GM12878 (cell line): ENCODE measurements at regions of chr20 and their contacts with region 1.

Region 1: DNA sequence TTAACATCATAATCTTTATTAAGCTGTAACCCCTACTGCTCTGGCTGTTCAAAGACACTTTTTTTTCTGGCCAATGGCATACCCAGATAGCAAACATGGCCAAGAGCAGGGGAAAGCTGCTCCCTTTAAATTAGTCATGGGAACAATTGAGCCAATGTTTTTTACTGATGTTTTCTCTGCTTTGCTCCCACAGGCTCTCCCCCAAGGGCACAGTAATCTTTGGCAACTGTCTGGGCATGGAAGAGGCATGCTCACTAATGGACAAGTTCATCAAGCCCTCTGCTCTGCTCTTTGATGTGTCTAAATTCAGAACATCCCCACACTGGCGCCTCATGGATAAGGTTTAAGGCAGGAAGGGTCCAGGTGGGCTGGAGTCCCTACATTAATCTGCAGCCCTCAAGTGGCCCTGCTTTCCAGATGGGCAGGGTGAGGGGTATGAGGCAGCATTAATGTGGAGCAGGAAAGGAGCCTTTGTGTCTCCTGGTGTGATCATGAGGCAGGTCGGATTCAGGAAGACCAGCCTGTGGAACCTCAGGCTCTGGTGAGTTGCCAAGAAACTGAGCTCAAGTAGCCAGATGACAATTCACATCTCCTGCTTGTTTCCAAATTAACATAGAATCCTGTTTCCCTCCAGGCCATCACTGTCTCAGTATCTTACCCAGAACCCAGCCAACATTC is 227.0 kb upstream of the CST7 start:
- DNase-seq: no peak
- ATAC-seq: no peak
- H3K4me3 ChIP-seq: no peak overlapping the region
- H3K27ac ChIP-seq: no peak overlapping the region
- H3K4me1 ChIP-seq: no peaks in the 10 kb centered on the region
- H3K27me3 ChIP-seq: peaks cover 0 to 4% of the 10 kb centered on the region in 2 experiments; a peak in 3 of 4 replicates
- CTCF ChIP-seq: no peak
- EP300 ChIP-seq: no peak
- POLR2A ChIP-seq: no peak
- RAD21 ChIP-seq: no peak

Region 2: GRCh38 chr20:24672886-24673677 is 48.9 kb before region 1 on chr20:
- CTCF ChIA-PET with region 1: interaction called, 3 read pairs
- POLR2A ChIA-PET with region 1: no interaction called
- RAD21 ChIA-PET with region 1: no interaction called
- SMC1A ChIA-PET with region 1: no interaction called
- in situ Hi-C with region 1: loop called (anchors 5 kb)
- intact Hi-C with region 1: no loop called
- DNase-seq: no peak
- ATAC-seq: no peak
- H3K4me3 ChIP-seq: no peak overlapping the region
- H3K27ac ChIP-seq: no peak overlapping the region
- H3K4me1 ChIP-seq: no peaks in the 10 kb centered on the region
- H3K27me3 ChIP-seq: peaks cover 0 to 2% of the 10 kb centered on the region in 2 experiments; a peak in 2 of 4 replicates
- CTCF ChIP-seq: no peak
- EP300 ChIP-seq: no peak
- POLR2A ChIP-seq: no peak
- RAD21 ChIP-seq: no peak